Head of caudate nucleus (tissue), 42 donors: ENCODE measurements at regions of chr15 and their contacts with region 1.

Region 1: DNA sequence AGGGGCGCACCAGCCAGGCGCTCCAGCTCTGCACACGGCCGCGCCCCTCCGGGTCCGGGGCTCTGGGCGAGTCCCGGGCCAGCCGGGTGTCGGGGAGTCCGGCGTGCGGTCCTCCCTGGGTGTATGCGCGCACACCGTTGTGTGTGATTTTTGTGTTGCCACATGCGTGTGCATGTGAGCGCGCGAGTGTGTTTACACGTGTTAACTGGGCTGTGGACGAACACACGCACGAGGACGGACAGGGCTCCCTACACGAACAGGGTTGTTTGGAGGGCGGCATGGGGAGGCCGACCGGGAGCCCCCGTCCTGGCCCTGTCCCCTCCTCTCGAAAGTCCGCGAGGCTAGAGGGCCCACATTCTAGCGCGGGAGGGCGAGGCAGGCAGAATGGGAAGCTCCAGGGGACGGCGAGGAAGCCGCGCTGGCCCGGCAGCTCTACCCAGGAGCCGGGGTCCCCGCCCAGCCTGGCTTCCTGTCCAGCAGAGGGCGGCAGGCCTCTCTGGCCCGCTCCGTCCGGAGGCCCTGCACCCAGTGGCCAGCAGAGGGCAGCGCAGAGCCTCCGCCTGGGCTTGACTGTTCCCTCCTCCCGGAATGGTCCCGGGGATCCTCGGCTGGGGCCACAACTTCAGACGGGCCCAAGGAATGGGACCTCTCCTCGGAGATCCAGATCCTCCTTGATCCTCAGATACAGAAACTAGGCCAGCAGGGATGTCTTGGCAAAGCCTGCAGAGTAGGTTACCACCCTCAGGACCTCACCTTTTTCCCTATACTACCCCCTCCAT is 611 bp upstream of the LINGO1 start:
- DNase-seq: peak; percentile 78 to 97 (median 93)

Region 2: DNA sequence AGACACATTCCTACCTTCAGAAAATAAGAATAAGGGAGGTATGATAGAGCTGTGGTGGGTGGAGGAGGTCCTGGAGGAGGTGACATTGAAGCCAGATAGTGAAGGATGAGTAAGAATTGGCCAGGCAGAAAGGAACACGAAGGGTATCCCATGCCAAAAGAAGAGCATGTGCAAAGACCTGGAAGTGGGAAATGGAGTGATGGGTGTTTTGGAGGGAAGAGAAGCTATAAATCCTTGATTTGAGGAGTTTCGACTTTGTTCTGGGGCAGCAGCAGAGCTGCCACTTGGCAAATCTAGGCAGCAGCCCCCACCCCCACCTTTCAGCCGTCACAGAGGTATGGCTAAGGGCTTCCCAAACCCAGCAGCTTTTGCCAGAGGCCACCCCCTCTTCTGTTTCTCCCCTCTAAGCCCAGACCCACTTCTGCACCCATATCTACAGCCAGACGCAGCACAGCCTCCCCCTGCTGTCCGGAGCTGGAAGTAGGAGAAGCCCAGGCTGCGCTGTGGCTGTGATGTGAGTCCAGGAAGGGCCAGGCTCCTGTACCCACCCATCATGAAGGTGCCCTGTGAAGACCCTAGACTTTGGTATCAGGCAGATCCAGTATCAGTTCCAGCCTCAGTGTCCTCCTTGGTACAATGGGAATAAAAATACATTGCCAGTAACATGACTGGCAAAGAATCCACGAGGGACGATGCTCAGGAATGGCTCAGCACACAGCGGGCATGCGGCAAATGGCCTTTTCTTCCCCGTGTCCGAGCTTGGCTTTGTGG is 188.1 kb after region 1 on chr15:
- intact Hi-C with region 1: loop called (anchors 5 kb)
- DNase-seq: peak; percentile 58 to 89 (median 78)